GM12878 (cell line): ENCODE measurements at regions of chr11 and their contacts with region 1.

Region 1: DNA sequence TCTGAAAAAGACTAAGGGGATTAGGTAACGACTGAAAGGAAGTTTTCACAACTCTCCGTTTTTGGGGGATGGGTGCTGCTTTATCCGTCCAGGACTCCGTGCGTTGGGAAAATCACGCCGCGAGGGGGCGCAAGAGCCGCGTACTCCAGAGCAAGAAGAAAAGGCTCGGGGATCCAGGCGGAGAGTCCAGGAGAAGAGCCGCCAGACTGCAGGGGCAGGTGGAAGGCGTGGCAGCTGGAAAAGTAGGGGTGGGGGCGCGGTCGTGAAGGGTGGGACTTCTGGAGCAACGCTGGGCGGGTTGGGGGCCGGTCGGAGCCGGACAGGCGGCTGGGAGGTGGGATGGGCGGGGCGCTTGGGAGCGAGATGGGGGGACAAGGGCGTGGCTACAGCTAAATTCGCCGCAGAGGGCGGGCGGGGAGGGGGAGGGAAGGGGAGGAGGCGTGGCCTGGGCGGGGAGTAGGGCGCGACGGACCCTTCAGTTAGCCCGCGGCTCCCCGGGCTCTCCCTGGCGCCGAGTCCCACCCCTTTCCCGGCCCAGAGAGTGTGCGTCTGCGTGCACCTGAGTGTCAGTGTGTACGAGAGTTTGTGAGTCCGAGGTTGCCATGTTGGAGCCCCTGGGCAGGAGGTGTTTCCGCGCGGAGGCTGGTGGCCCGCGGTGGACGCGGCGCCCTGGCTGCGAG is 613 bp upstream of the ARHGEF17 start:
- DNase-seq: peak; percentile 75
- ATAC-seq: peak; percentile 85
- H3K4me3 ChIP-seq: peak overlapping the region; percentile 76
- H3K27ac ChIP-seq: peak overlapping the region; percentile 69
- H3K4me1 ChIP-seq: peaks cover 7% of the 10 kb centered on the region; the same call in 1 of the 2 replicates
- H3K27me3 ChIP-seq: no peaks in the 10 kb centered on the region
- CTCF ChIP-seq: peak; percentile 81 to 95 (median 83)
- EP300 ChIP-seq: no peak
- POLR2A ChIP-seq: peak; percentile 77
- RAD21 ChIP-seq: peak; percentile 94

Region 2: GRCh38 chr11:73295231-73295995 is 12.1 kb before region 1 on chr11:
- CTCF ChIA-PET with region 1: interaction called, 103 read pairs
- POLR2A ChIA-PET with region 1: interaction called, 3 read pairs
- RAD21 ChIA-PET with region 1: interaction called, 14 read pairs
- SMC1A ChIA-PET with region 1: interaction called, 17 read pairs
- in situ Hi-C with region 1: no loop called
- intact Hi-C with region 1: no loop called
- DNase-seq: peak; percentile 31
- ATAC-seq: peak; percentile 92
- H3K4me3 ChIP-seq: no peak overlapping the region
- H3K27ac ChIP-seq: no peak overlapping the region
- H3K4me1 ChIP-seq: no peaks in the 10 kb centered on the region
- H3K27me3 ChIP-seq: no peaks in the 10 kb centered on the region; a peak in 2 of 4 replicates
- CTCF ChIP-seq: peak; percentile 92 to 99 (median 98)
- EP300 ChIP-seq: no peak
- POLR2A ChIP-seq: no peak
- RAD21 ChIP-seq: peak; percentile 79

Region 3: GRCh38 chr11:73325036-73325981 is 17.8 kb after region 1 on chr11:
- CTCF ChIA-PET with region 1: interaction called, 126 read pairs
- POLR2A ChIA-PET with region 1: interaction called, 78 read pairs
- RAD21 ChIA-PET with region 1: interaction called, 115 read pairs
- SMC1A ChIA-PET with region 1: interaction called, 106 read pairs
- in situ Hi-C with region 1: no loop called
- intact Hi-C with region 1: loop called (anchors 1 kb)
- DNase-seq: peak; percentile 83
- ATAC-seq: peak; percentile 83
- H3K4me3 ChIP-seq: peak overlapping the region; percentile 38; the same call in 1 of the 2 replicates
- H3K27ac ChIP-seq: peak overlapping the region; percentile 99
- H3K4me1 ChIP-seq: peaks cover 80% of the 10 kb centered on the region
- H3K27me3 ChIP-seq: no peaks in the 10 kb centered on the region
- CTCF ChIP-seq: no peak
- EP300 ChIP-seq: no peak; a peak in 2 of 4 replicates
- POLR2A ChIP-seq: peak; percentile 70
- RAD21 ChIP-seq: no peak

Region 4: GRCh38 chr11:73376160-73376802 is 68.8 kb after region 1 on chr11 and contains the start of gene RELT:
- CTCF ChIA-PET with region 1: interaction called, 4 read pairs
- POLR2A ChIA-PET with region 1: no interaction called
- RAD21 ChIA-PET with region 1: interaction called, 3 read pairs
- SMC1A ChIA-PET with region 1: no interaction called
- in situ Hi-C with region 1: no loop called
- intact Hi-C with region 1: loop called (anchors 5 kb)
- DNase-seq: peak; percentile 65
- ATAC-seq: peak; percentile 75
- H3K4me3 ChIP-seq: peak within 1 kb of the TSS; percentile 81
- H3K27ac ChIP-seq: peak within 1 kb of the TSS; percentile 92
- H3K4me1 ChIP-seq: peaks cover 43% of the 10 kb centered on the region
- H3K27me3 ChIP-seq: no peaks in the 10 kb centered on the region
- CTCF ChIP-seq: peak; percentile 88 to 95 (median 90)
- EP300 ChIP-seq: no peak
- POLR2A ChIP-seq: no peak
- RAD21 ChIP-seq: peak; percentile 54
- polyA plus RNA-seq, gene RELT: 1.2 to 3.0 TPM

Region 5: GRCh38 chr11:73384872-73385689 is 77.6 kb after region 1 on chr11:
- CTCF ChIA-PET with region 1: interaction called, 5 read pairs
- POLR2A ChIA-PET with region 1: interaction called, 5 read pairs
- RAD21 ChIA-PET with region 1: interaction called, 14 read pairs
- SMC1A ChIA-PET with region 1: interaction called, 3 read pairs
- in situ Hi-C with region 1: no loop called
- intact Hi-C with region 1: no loop called
- DNase-seq: peak; percentile 69
- ATAC-seq: peak; percentile 73
- H3K4me3 ChIP-seq: peak overlapping the region; percentile 66
- H3K27ac ChIP-seq: peak overlapping the region; percentile 95
- H3K4me1 ChIP-seq: peaks cover 85% of the 10 kb centered on the region
- H3K27me3 ChIP-seq: no peaks in the 10 kb centered on the region
- CTCF ChIP-seq: no peak
- EP300 ChIP-seq: peak; percentile 11 to 67; a peak in 3 of 4 replicates
- POLR2A ChIP-seq: no peak
- RAD21 ChIP-seq: no peak

Region 6: GRCh38 chr11:73393479-73394380 is 86.3 kb after region 1 on chr11:
- CTCF ChIA-PET with region 1: interaction called, 7 read pairs
- POLR2A ChIA-PET with region 1: no interaction called
- RAD21 ChIA-PET with region 1: interaction called, 12 read pairs
- SMC1A ChIA-PET with region 1: no interaction called
- in situ Hi-C with region 1: no loop called
- intact Hi-C with region 1: no loop called
- DNase-seq: no peak
- ATAC-seq: peak; percentile 84
- H3K4me3 ChIP-seq: no peak overlapping the region
- H3K27ac ChIP-seq: no peak overlapping the region
- H3K4me1 ChIP-seq: peaks cover 4% of the 10 kb centered on the region
- H3K27me3 ChIP-seq: no peaks in the 10 kb centered on the region
- CTCF ChIP-seq: peak; percentile 83 to 90 (median 88)
- EP300 ChIP-seq: no peak
- POLR2A ChIP-seq: no peak
- RAD21 ChIP-seq: peak; percentile 91

Region 7: DNA sequence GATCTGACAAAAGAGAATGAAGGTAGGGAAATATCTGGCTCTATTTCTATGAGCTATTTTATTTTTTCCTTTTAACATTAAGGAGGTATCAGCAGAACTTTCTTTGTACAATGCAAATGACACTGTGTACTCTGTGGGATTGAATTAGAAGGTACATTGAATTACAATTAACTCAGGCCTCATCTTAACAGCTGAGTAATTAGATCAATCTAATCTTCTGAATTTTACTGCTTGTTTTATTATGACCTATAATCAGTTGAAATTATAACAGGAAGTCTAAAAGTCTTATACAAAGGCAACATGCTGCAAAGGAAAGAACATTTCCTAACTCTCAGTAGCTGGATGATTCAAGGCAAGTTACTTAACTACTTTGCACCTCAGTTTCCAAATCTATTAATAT is 138.5 kb after region 1 on chr11:
- CTCF ChIA-PET with region 1: no interaction called
- POLR2A ChIA-PET with region 1: no interaction called
- RAD21 ChIA-PET with region 1: no interaction called
- SMC1A ChIA-PET with region 1: no interaction called
- in situ Hi-C with region 1: no loop called
- intact Hi-C with region 1: no loop called
- DNase-seq: no peak
- ATAC-seq: no peak
- H3K4me3 ChIP-seq: no peak overlapping the region
- H3K27ac ChIP-seq: no peak overlapping the region
- H3K4me1 ChIP-seq: no peaks in the 10 kb centered on the region
- H3K27me3 ChIP-seq: no peaks in the 10 kb centered on the region
- CTCF ChIP-seq: no peak
- EP300 ChIP-seq: no peak
- POLR2A ChIP-seq: no peak
- RAD21 ChIP-seq: no peak